ENCODE measurements at regions of chr13 and their contacts with region 1.

Region 1: DNA sequence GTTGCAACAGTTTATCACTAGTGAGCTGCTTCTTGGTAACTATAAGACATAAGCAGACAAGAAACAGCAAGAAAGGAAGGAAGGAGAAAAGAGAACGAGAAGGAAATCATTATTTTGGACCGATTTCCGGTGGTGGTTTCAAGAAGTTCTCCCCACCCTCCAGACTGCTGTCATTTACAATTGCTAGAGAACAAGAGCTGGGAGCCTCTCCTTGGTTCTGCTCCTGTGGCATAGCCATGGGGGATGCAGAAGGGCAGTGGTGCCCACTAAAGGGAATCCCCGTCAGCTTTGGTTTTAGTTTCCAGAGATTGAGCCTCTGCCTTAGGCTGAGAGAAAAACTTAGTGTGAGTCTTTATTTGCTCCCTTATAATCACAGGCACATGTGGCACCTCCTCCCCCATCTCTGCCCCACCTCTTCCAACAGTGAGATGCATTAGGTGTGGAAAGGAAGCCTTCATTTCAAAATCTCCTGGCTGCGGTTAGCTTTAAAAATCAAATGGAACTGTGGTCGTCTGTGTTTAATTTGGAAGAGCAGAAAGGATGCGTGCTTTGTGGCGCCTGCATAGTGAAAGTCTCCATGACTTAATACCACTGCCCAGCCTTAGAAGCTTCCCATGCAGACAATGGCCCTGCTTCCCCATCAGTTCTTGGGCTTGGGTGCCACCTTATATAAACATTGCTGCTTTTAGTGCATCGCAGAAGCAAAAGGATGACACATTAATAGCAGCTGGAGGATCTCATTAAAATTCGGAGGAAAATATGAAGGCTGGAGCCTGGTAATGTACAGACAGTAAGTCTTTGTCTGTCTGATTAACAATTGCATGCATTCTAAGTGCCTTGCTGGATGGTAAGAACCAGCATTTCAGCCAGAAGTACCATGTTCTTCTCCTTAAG is 25.0 kb downstream of the LRCH1 start:
- DNase-seq: no peak
- ATAC-seq: peak; percentile 46
- H3K4me3 ChIP-seq: peak overlapping the region; percentile 71
- H3K27ac ChIP-seq: peak overlapping the region; percentile 83
- H3K4me1 ChIP-seq: peaks cover 76% of the 10 kb centered on the region
- H3K27me3 ChIP-seq: no peaks in the 10 kb centered on the region
- CTCF ChIP-seq: no peak
- EP300 ChIP-seq: no peak
- POLR2A ChIP-seq: no peak
- RAD21 ChIP-seq: no peak

Region 2: DNA sequence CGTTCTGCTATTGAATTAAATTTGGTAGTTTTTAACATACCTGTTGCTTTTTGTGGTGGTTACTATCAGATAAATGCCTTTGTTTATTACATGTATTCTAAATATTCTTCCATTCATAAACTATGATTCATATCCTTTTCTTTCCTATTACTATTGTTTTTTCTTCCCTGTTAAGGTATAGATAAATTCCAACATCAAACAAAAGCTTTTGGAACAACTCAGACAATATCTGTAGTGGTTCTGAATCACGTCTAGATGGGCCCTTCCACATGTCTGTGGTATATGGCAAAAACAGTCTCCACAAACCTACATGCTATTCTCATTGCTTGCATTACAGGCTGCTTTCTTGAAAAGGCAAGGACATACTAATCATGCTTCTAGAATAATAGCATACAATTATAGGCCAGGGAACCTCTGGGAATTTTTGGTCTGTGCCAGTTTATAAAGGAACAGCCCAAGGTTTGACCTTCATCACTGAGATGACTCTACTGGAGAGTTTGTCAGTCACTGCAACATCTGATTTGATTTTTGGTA is 18.6 kb before region 1 on chr13:
- CTCF ChIA-PET with region 1: interaction called, 16 read pairs
- POLR2A ChIA-PET with region 1: interaction called, 24 read pairs
- RAD21 ChIA-PET with region 1: interaction called, 73 read pairs
- SMC1A ChIA-PET with region 1: interaction called, 124 read pairs
- in situ Hi-C with region 1: no loop called
- intact Hi-C with region 1: loop called (anchors 2 kb)
- DNase-seq: no peak
- ATAC-seq: no peak
- H3K4me3 ChIP-seq: no peak overlapping the region; the same call in 1 of the 2 replicates
- H3K27ac ChIP-seq: no peak overlapping the region
- H3K4me1 ChIP-seq: peaks cover 10% of the 10 kb centered on the region
- H3K27me3 ChIP-seq: no peaks in the 10 kb centered on the region
- CTCF ChIP-seq: no peak
- EP300 ChIP-seq: no peak
- POLR2A ChIP-seq: no peak
- RAD21 ChIP-seq: no peak

Region 3: DNA sequence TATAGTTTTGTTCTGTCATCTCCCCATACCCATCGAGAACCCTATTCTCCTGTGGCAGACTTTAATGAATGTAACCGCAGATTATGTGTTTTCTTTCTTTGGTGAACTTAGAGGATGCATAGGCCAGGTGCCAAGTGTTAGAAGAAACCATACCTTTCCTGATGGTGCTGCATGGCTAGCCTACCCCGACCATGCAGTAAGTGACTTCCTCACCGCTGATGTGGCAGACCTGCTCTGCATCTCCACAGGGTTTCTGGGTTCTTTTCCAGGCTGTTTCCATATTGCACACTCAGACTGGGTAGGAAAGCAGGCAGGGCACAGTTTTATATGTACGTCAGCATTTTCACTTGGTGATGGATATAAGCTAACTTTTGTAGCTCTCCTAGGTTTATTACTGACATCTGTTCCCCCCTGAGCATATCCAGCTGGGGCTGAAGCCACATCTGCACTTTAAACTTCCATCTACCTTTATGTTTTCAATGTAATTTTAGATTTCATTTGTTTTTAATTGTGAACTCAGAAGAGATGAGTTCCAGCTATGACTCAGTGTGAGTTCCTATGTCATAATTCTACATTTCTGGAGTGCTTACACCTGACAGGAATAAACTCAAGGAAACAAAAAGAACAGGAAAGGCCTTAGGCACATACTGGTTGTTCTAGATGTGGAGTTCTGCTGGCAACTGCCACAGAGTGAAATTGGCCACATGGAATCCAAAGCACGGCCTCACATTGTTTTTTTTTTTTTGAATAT is 17.4 kb after region 1 on chr13:
- CTCF ChIA-PET with region 1: interaction called, 6 read pairs
- POLR2A ChIA-PET with region 1: interaction called, 56 read pairs
- RAD21 ChIA-PET with region 1: interaction called, 97 read pairs
- SMC1A ChIA-PET with region 1: interaction called, 367 read pairs
- in situ Hi-C with region 1: no loop called
- intact Hi-C with region 1: no loop called
- DNase-seq: no peak
- ATAC-seq: peak; percentile 60
- H3K4me3 ChIP-seq: peak overlapping the region; percentile 12; the same call in 1 of the 2 replicates
- H3K27ac ChIP-seq: peak overlapping the region; percentile 62
- H3K4me1 ChIP-seq: peaks cover 76% of the 10 kb centered on the region
- H3K27me3 ChIP-seq: no peaks in the 10 kb centered on the region
- CTCF ChIP-seq: no peak
- EP300 ChIP-seq: no peak; a peak in 1 of 4 replicates
- POLR2A ChIP-seq: no peak
- RAD21 ChIP-seq: no peak

Region 4: DNA sequence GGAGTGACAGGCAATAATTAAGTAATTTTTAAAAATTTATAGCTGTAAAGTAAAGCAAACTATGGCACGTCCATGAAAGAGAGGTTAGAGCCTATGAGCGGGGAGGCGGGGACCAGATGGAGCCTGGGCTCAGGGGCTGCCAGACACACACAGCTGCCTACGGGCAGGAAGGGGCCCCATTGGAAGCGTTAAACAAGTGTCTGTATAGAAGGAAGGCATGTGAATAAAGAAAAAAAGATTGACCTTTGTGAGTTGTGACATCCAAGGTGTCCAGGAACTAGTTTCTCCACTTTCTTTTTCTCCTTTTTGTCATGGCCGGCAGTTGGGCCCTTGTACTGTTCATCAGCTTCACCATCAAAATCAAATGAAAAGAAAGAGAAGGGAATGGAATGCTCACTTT is 31.8 kb after region 1 on chr13:
- CTCF ChIA-PET with region 1: interaction called, 3 read pairs
- POLR2A ChIA-PET with region 1: interaction called, 5 read pairs
- RAD21 ChIA-PET with region 1: interaction called, 11 read pairs
- SMC1A ChIA-PET with region 1: interaction called, 367 read pairs
- in situ Hi-C with region 1: no loop called
- intact Hi-C with region 1: no loop called
- DNase-seq: no peak
- ATAC-seq: no peak
- H3K4me3 ChIP-seq: no peak overlapping the region
- H3K27ac ChIP-seq: no peak overlapping the region
- H3K4me1 ChIP-seq: peaks cover 40% of the 10 kb centered on the region
- H3K27me3 ChIP-seq: no peaks in the 10 kb centered on the region
- CTCF ChIP-seq: no peak
- EP300 ChIP-seq: no peak
- POLR2A ChIP-seq: no peak
- RAD21 ChIP-seq: no peak

Region 5: GRCh38 chr13:46633416-46633815 is 55.5 kb after region 1 on chr13:
- CTCF ChIA-PET with region 1: interaction called, 3 read pairs
- POLR2A ChIA-PET with region 1: interaction called, 22 read pairs
- RAD21 ChIA-PET with region 1: interaction called, 10 read pairs
- SMC1A ChIA-PET with region 1: interaction called, 23 read pairs
- in situ Hi-C with region 1: no loop called
- intact Hi-C with region 1: no loop called
- DNase-seq: no peak
- ATAC-seq: no peak
- H3K4me3 ChIP-seq: no peak overlapping the region
- H3K27ac ChIP-seq: no peak overlapping the region
- H3K4me1 ChIP-seq: peaks cover 18% of the 10 kb centered on the region
- H3K27me3 ChIP-seq: no peaks in the 10 kb centered on the region
- CTCF ChIP-seq: no peak
- EP300 ChIP-seq: no peak
- POLR2A ChIP-seq: no peak
- RAD21 ChIP-seq: no peak

Region 6: DNA sequence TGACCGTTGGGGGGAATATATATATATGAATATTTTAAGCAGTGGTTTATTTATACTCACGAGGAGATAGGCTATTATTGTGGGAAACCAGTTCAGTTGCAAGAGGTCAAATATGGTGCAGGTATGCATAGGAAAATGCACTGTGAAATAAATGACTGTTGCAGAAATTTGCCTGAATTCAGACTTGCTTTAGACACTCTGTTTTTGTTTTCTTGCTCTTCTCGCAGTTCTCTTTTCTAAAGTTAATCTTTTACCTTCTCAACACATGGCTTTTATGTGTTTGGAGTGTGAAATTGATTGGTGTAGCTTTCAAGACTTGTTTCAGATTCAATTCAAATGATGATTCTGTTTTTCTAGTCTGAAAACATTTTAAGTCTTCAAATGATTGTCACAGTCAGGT is 84.7 kb after region 1 on chr13:
- CTCF ChIA-PET with region 1: interaction called, 5 read pairs
- POLR2A ChIA-PET with region 1: interaction called, 11 read pairs
- RAD21 ChIA-PET with region 1: interaction called, 23 read pairs
- SMC1A ChIA-PET with region 1: interaction called, 23 read pairs
- in situ Hi-C with region 1: no loop called
- intact Hi-C with region 1: no loop called
- DNase-seq: no peak
- ATAC-seq: peak; percentile 70
- H3K4me3 ChIP-seq: no peak overlapping the region
- H3K27ac ChIP-seq: peak overlapping the region; percentile 51; the same call in 1 of the 2 replicates
- H3K4me1 ChIP-seq: peaks cover 47% of the 10 kb centered on the region
- H3K27me3 ChIP-seq: no peaks in the 10 kb centered on the region
- CTCF ChIP-seq: no peak
- EP300 ChIP-seq: peak in 1 of 2 experiments; percentile 59; a peak in 2 of 4 replicates
- POLR2A ChIP-seq: no peak
- RAD21 ChIP-seq: no peak